A673 (cell line): ENCODE measurements at regions of chr11 and their contacts with region 1.

Region 1: GRCh38 chr11:9821008-9821752 is 157.3 kb downstream of the SWAP70 start:
- DNase-seq: peak; percentile 37
- H3K4me3 ChIP-seq: no peak overlapping the region
- H3K27ac ChIP-seq: no peak overlapping the region
- H3K4me1 ChIP-seq: peaks cover 3% of the 10 kb centered on the region
- H3K27me3 ChIP-seq: no peaks in the 10 kb centered on the region
- CTCF ChIP-seq: no peak

Region 2: GRCh38 chr11:9489080-9489765 is 332.0 kb before region 1 on chr11:
- CTCF ChIA-PET with region 1: no interaction called
- POLR2A ChIA-PET with region 1: interaction called, 10 read pairs
- intact Hi-C with region 1: no loop called
- DNase-seq: no peak
- H3K4me3 ChIP-seq: no peak overlapping the region
- H3K27ac ChIP-seq: no peak overlapping the region
- H3K4me1 ChIP-seq: peaks cover 9% of the 10 kb centered on the region
- H3K27me3 ChIP-seq: no peaks in the 10 kb centered on the region
- CTCF ChIP-seq: no peak

Region 3: GRCh38 chr11:9802291-9802861 is 18.8 kb before region 1 on chr11:
- CTCF ChIA-PET with region 1: no interaction called
- POLR2A ChIA-PET with region 1: no interaction called
- intact Hi-C with region 1: no loop called
- DNase-seq: peak; percentile 20
- H3K4me3 ChIP-seq: no peak overlapping the region
- H3K27ac ChIP-seq: peak overlapping the region; percentile 89
- H3K4me1 ChIP-seq: peaks cover 23% of the 10 kb centered on the region
- H3K27me3 ChIP-seq: no peaks in the 10 kb centered on the region
- CTCF ChIP-seq: no peak

Region 4: DNA sequence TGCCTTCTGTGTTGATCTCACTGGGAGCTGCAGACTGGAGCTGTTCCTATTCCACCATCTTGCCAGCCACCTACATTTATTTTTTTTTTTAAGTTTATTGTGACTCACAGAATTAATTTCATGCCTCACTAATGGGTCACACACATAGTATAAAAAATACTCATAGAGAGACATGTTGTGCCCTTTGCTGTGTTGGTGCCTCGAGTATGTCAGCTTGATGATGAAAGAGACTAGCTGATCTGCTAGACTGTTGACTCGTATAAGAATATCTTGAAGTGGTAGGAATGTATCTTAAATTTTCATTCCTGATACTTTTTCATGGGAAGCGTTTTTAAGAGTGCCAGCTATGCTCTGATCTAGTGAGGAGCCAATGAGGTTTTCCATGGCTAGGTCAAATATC is 605.3 kb after region 1 on chr11:
- CTCF ChIA-PET with region 1: interaction called, 11 read pairs
- POLR2A ChIA-PET with region 1: no interaction called
- intact Hi-C with region 1: no loop called
- DNase-seq: no peak
- H3K4me3 ChIP-seq: no peak overlapping the region
- H3K27ac ChIP-seq: no peak overlapping the region
- H3K4me1 ChIP-seq: no peaks in the 10 kb centered on the region
- H3K27me3 ChIP-seq: no peaks in the 10 kb centered on the region
- CTCF ChIP-seq: no peak